ENCODE measurements at regions of chr2 and their contacts with region 1.

Region 1: DNA sequence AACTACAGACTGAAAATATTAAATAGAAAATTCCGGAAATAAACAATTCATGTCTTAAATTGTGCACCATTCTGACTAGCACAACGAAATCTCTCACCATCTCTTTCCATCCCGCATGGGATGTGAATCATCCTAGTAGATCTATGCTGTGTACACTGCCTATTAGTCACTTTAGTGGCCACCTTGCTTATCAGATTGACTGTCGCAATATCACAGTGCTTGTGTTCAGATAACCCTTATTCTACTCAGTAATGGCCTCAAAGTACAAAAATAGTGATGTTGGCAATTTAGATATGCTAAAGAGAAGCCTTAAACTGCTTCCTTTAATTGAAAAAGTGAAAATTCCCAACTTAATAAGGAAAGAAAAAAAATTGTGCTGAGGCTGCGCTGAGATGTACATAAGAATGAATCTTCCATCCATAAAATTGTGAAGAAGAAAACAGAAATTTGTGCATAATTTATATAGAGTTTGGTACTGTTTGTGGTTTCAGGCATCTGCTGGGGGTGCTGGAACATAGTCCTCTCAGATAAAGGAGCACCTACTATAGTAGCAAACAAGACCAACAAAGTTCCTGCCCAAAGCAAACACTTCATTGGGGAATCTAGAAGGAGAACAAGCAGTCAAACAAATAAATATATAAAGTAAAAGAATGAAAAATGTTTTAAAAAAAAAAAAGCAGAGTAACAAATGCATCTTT is 12.0 kb downstream of the PSMD1 start:
- DNase-seq: no peak
- H3K4me3 Mint-ChIP-seq: no peak overlapping the region
- H3K27ac Mint-ChIP-seq: no peak overlapping the region
- H3K4me1 Mint-ChIP-seq: peaks cover 10% of the 10 kb centered on the region
- H3K27me3 Mint-ChIP-seq: no peaks in the 10 kb centered on the region

Region 2: GRCh38 chr2:231052494-231053451 is 15.9 kb before region 1 on chr2:
- CTCF ChIA-PET with region 1: interaction called, 10 read pairs
- POLR2A ChIA-PET with region 1: no interaction called
- DNase-seq: peak; percentile 84
- H3K4me3 Mint-ChIP-seq: peak overlapping the region; percentile 83
- H3K27ac Mint-ChIP-seq: peak overlapping the region; percentile 76
- H3K4me1 Mint-ChIP-seq: peaks cover 33% of the 10 kb centered on the region
- H3K27me3 Mint-ChIP-seq: peaks cover 11% of the 10 kb centered on the region

Region 3: GRCh38 chr2:231104115-231104713 is 35.5 kb after region 1 on chr2:
- CTCF ChIA-PET with region 1: no interaction called
- POLR2A ChIA-PET with region 1: no interaction called
- DNase-seq: peak; percentile 76
- H3K4me3 Mint-ChIP-seq: no peak overlapping the region
- H3K27ac Mint-ChIP-seq: no peak overlapping the region
- H3K4me1 Mint-ChIP-seq: peaks cover 1% of the 10 kb centered on the region
- H3K27me3 Mint-ChIP-seq: no peaks in the 10 kb centered on the region

Measured in activated CD4-positive, alpha-beta T cell treated with anti-CD3 and anti-CD28 coated beads, Interleukin-2, amount 10 ng/mL, durations not matched to agents 7 days and 5 days (primary cell).